CD8-positive, alpha-beta T cell (primary cell): ENCODE measurements at regions of chr19 and their contacts with region 1.

Region 1: GRCh38 chr19:40465557-40466150 is at the start of gene BLVRB:
- DNase-seq: peak; percentile 98 to 100 (median 100)
- ATAC-seq: peak; percentile 77
- H3K4me3 ChIP-seq: peak within 1 kb of the TSS; percentile 60 to 72
- H3K4me3 Mint-ChIP-seq: peak within 1 kb of the TSS; percentile 81
- H3K27ac ChIP-seq: peak within 1 kb of the TSS; percentile 41 to 93
- H3K27ac Mint-ChIP-seq: peak within 1 kb of the TSS; percentile 89
- H3K4me1 ChIP-seq: peaks cover 25% of the 10 kb centered on the region
- H3K4me1 Mint-ChIP-seq: peaks cover 26% of the 10 kb centered on the region
- H3K27me3 ChIP-seq: peaks cover 0 to 2% of the 10 kb centered on the region in 2 experiments
- H3K27me3 Mint-ChIP-seq: peaks cover 13% of the 10 kb centered on the region
- CTCF ChIP-seq: no peak
- total RNA-seq, gene BLVRB: 5.1 to 6.4 TPM

Region 2: GRCh38 chr19:40348125-40348913 is 117.3 kb before region 1 on chr19 and contains the starts of genes C19orf47 and PLD3:
- CTCF ChIA-PET with region 1: no interaction called
- POLR2A ChIA-PET with region 1: interaction called, 5 read pairs
- intact Hi-C with region 1: loop called in 1 of 2 experiments (anchors 1 kb)
- DNase-seq: peak; percentile 96 to 100 (median 98)
- ATAC-seq: peak; percentile 89
- H3K4me3 ChIP-seq: peak within 1 kb of the TSS; percentile 61 to 89
- H3K4me3 Mint-ChIP-seq: peak within 1 kb of the TSS; percentile 88
- H3K27ac ChIP-seq: peak within 1 kb of the TSS; percentile 73
- H3K27ac Mint-ChIP-seq: peak within 1 kb of the TSS; percentile 90
- H3K4me1 ChIP-seq: peaks cover 13% of the 10 kb centered on the region
- H3K4me1 Mint-ChIP-seq: peaks cover 37% of the 10 kb centered on the region
- H3K27me3 ChIP-seq: no peaks in the 10 kb centered on the region
- H3K27me3 Mint-ChIP-seq: no peaks in the 10 kb centered on the region
- CTCF ChIP-seq: no peak
- total RNA-seq, gene C19orf47: 10.2 to 11.2 TPM
- total RNA-seq, gene PLD3: 48.9 to 56.1 TPM

Region 3: GRCh38 chr19:40425450-40426287 is 40.0 kb before region 1 on chr19 and contains the start of gene SERTAD1:
- CTCF ChIA-PET with region 1: interaction called, 19 read pairs
- POLR2A ChIA-PET with region 1: interaction called, 10 read pairs
- intact Hi-C with region 1: loop called (anchors 1 kb)
- DNase-seq: peak; percentile 100
- ATAC-seq: peak; percentile 93
- H3K4me3 ChIP-seq: peak within 1 kb of the TSS; percentile 72 to 92
- H3K4me3 Mint-ChIP-seq: peak within 1 kb of the TSS; percentile 92
- H3K27ac ChIP-seq: peak within 1 kb of the TSS; percentile 91 to 92
- H3K27ac Mint-ChIP-seq: peak within 1 kb of the TSS; percentile 98
- H3K4me1 ChIP-seq: peaks cover 17% of the 10 kb centered on the region
- H3K4me1 Mint-ChIP-seq: peaks cover 28% of the 10 kb centered on the region
- H3K27me3 ChIP-seq: no peaks in the 10 kb centered on the region
- H3K27me3 Mint-ChIP-seq: no peaks in the 10 kb centered on the region
- CTCF ChIP-seq: peak; percentile 55
- total RNA-seq, gene SERTAD1: 36.7 to 38.7 TPM

Region 4: GRCh38 chr19:40529093-40529954 is 63.7 kb after region 1 on chr19:
- CTCF ChIA-PET with region 1: no interaction called
- POLR2A ChIA-PET with region 1: no interaction called
- intact Hi-C with region 1: loop called (anchors 1 to 2 kb)
- DNase-seq: peak; percentile 77 to 94 (median 89)
- ATAC-seq: peak; percentile 90
- H3K4me3 ChIP-seq: peak overlapping the region; percentile 41 to 46
- H3K4me3 Mint-ChIP-seq: peak overlapping the region; percentile 66
- H3K27ac ChIP-seq: no peak overlapping the region
- H3K27ac Mint-ChIP-seq: peak overlapping the region; percentile 33
- H3K4me1 ChIP-seq: peaks cover 13% of the 10 kb centered on the region
- H3K4me1 Mint-ChIP-seq: peaks cover 14% of the 10 kb centered on the region
- H3K27me3 ChIP-seq: peaks cover 5 to 8% of the 10 kb centered on the region in 2 experiments
- H3K27me3 Mint-ChIP-seq: peaks cover 20% of the 10 kb centered on the region
- CTCF ChIP-seq: peak; percentile 92

Region 5: DNA sequence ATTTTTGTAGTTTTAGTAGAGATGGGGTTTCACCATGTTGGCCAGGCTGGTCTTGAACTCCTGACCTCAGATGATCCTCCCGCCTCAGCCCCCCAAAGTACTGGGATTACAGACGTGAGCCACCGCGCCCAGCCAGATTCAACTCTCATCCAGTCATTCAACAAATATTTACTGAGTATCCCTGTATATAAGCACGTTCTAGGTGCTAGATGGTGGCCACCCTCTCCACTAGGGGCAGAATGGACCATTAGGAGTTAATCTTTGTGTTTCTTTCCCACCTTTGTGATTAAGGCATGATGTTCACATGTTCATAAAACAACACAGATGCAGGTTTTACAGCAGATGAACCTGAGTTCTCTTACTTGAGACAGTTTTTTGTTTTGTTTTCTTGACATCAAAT is 118.4 kb after region 1 on chr19:
- CTCF ChIA-PET with region 1: no interaction called
- POLR2A ChIA-PET with region 1: no interaction called
- intact Hi-C with region 1: no loop called
- DNase-seq: no peak
- ATAC-seq: no peak
- H3K4me3 ChIP-seq: no peak overlapping the region
- H3K4me3 Mint-ChIP-seq: no peak overlapping the region
- H3K27ac ChIP-seq: no peak overlapping the region
- H3K27ac Mint-ChIP-seq: no peak overlapping the region
- H3K4me1 ChIP-seq: no peaks in the 10 kb centered on the region
- H3K4me1 Mint-ChIP-seq: peaks cover 3% of the 10 kb centered on the region
- H3K27me3 ChIP-seq: no peaks in the 10 kb centered on the region
- H3K27me3 Mint-ChIP-seq: no peaks in the 10 kb centered on the region
- CTCF ChIP-seq: no peak

Region 6: DNA sequence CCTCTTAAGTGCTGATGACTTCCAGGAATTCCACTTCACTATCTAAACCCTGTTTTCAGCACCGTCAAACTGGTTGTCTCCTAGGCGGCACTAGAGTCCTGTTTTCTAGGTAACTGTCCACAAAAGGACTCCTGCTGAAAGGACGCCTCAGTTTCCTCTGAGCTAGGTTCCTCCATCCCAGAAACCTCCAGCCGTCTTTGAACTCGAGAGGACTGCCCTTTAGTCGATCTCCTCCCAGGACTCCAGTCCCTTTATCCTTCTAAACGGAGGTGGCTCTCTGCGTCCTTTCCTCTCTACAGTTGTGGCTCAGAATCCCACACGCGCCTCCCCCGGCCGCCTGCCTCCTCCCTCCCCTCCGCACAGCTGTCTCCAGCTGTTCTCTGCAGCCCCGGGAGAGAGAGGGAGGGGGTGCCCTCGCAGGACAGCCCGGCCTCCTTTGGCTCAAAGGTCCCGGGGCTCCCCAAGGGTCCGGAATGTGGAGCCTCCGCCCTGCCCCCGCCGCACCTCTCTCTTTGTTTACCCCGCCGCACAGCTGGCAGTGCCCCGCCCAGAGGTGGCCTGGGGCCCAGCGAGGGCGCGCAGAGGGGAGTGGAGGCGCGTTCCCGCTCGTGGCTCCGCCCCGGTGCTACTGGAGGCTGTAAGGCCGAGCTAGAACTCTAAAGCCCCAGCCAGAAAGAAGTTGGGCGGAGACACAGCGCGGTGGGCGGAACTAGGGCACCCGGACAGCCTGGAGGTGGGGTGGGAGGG is 137.9 kb after region 1 on chr19:
- CTCF ChIA-PET with region 1: interaction called, 13 read pairs
- POLR2A ChIA-PET with region 1: interaction called, 3 read pairs
- intact Hi-C with region 1: loop called (anchors 2 kb)
- DNase-seq: peak; percentile 92 to 98 (median 96)
- ATAC-seq: peak; percentile 73
- H3K4me3 ChIP-seq: peak overlapping the region; percentile 54 to 58
- H3K4me3 Mint-ChIP-seq: peak overlapping the region; percentile 89
- H3K27ac ChIP-seq: peak overlapping the region in 1 of 2 experiments; percentile 39
- H3K27ac Mint-ChIP-seq: peak overlapping the region; percentile 76
- H3K4me1 ChIP-seq: peaks cover 73% of the 10 kb centered on the region
- H3K4me1 Mint-ChIP-seq: peaks cover 66% of the 10 kb centered on the region
- H3K27me3 ChIP-seq: peaks cover 23 to 34% of the 10 kb centered on the region in 2 experiments
- H3K27me3 Mint-ChIP-seq: peaks cover 20% of the 10 kb centered on the region
- CTCF ChIP-seq: no peak

Region 7: GRCh38 chr19:40777937-40778705 is 312.5 kb after region 1 on chr19 and contains the start of gene RAB4B:
- CTCF ChIA-PET with region 1: no interaction called
- POLR2A ChIA-PET with region 1: no interaction called
- intact Hi-C with region 1: loop called in 1 of 2 experiments (anchors 5 kb)
- DNase-seq: peak; percentile 100
- ATAC-seq: peak; percentile 83
- H3K4me3 ChIP-seq: peak within 1 kb of the TSS; percentile 87 to 89
- H3K4me3 Mint-ChIP-seq: peak within 1 kb of the TSS; percentile 92
- H3K27ac ChIP-seq: peak within 1 kb of the TSS; percentile 93 to 98
- H3K27ac Mint-ChIP-seq: peak within 1 kb of the TSS; percentile 95
- H3K4me1 ChIP-seq: peaks cover 26% of the 10 kb centered on the region
- H3K4me1 Mint-ChIP-seq: peaks cover 37% of the 10 kb centered on the region
- H3K27me3 ChIP-seq: no peaks in the 10 kb centered on the region
- H3K27me3 Mint-ChIP-seq: no peaks in the 10 kb centered on the region
- CTCF ChIP-seq: no peak
- total RNA-seq, gene RAB4B: 19.9 to 21.3 TPM